Activated T-helper 1 cell treated with anti-CD3 and anti-CD28 coated beads, Interleukin-12 subunit alpha, Interleukin-12 subunit beta, Interleukin-2, Interleukin-4 antibody, amounts not matched to agents 30 ng/mL and 10 ng/mL and 1 ng/mL, durations not matched to agents 14 hours and 24 hours and 36 hours (primary cell): ENCODE measurements at regions of chr7 and their contacts with region 1.

Region 1: DNA sequence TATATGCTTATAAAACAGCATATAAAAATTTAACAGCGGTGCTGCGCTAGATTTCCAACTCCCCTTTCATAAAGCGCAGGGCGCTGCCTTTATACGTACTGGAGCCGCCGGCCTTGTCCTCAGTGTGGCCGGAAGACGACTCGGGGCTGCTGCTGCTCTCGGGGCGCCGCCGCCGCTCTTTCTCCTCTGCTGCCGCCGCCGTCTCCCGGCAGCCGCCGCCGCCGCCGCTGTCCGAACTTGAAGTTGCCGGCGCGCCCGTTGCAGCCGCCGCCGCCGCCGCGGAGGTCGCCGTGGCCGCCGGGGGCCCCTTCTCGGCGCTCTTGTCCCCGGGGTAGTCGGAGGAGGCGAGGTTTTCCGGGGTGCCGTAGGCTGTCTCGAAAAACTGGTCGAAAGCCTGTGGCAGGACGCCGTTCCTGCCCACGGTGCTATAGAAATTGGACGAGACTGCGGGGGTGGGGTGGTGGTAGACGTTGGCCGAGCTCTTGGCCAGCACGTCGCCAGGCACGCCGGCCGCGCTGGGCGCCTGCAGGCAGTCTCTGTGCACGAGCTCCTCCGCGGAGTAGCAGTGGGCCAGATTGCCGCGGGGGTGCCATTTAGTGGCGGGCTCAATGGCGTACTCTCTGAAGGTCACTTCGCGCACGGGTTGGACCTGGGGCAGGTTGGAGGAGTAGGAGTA is 557 bp downstream of the HOXA11 start:
- DNase-seq: no peak
- H3K4me3 Mint-ChIP-seq: no peak overlapping the region
- H3K27ac Mint-ChIP-seq: peak overlapping the region; percentile 87
- H3K4me1 Mint-ChIP-seq: peaks cover 5% of the 10 kb centered on the region
- H3K27me3 Mint-ChIP-seq: peaks cover 81% of the 10 kb centered on the region

Region 2: GRCh38 chr7:27150568-27151340 is 33.7 kb before region 1 on chr7:
- intact Hi-C with region 1: loop called (anchors 1 kb)
- DNase-seq: peak; percentile 46
- H3K4me3 Mint-ChIP-seq: peak overlapping the region; percentile 57
- H3K27ac Mint-ChIP-seq: peak overlapping the region; percentile 7
- H3K4me1 Mint-ChIP-seq: peaks cover 18% of the 10 kb centered on the region
- H3K27me3 Mint-ChIP-seq: peaks cover 88% of the 10 kb centered on the region

Region 3: DNA sequence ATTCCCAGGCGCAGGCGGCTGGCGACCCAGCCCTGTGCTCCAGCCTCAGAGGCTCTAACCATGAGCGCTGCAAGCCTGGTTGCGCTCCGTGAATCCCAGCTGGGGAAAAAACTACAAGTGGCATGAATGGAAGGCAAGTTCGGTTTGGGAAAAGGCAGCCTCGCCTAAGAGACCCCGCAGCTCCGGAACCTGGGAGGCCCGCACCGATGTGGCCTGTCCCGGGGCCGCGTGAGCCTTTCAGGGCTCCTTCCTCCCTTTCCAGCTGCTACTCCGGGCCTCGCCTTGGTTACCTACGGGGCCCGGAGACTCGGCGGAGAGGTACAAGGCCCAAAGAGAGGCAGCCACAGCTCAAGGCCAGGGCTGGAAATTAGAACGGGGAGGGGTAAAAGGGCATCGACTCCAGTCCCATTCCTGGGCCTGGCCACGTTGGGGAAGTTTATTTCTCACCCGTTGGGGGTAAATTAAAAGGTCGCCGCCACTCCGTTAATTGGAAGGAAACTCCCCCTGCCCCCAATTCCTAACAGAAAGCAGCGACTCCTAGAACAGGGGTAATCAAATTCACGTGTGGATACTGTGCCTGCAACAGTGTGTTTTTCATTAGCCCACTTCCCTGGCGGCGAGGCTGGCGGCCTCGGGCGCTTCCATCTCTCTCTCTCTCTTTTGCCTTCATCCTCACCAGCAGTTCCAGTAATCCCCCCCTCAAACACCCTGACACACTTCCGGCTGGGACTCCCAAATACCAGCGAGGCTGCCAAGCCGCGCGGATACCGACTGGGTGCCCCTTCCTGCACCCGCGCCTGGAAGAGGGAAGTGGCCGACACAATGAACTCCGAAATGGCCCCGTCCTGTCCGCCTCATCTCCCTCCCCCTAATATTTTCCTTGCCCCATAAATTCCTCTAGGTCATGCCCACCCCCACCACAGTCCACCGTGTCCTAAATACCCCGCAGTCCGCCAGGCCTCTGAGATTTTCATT is 17.7 kb before region 1 on chr7:
- intact Hi-C with region 1: loop called (anchors 1 kb)
- DNase-seq: no peak
- H3K4me3 Mint-ChIP-seq: no peak overlapping the region
- H3K27ac Mint-ChIP-seq: peak overlapping the region; percentile 58
- H3K4me1 Mint-ChIP-seq: peaks cover 6% of the 10 kb centered on the region
- H3K27me3 Mint-ChIP-seq: peaks cover 75% of the 10 kb centered on the region

Region 4: GRCh38 chr7:27172823-27173510 is 11.5 kb before region 1 on chr7:
- intact Hi-C with region 1: loop called (anchors 1 kb)
- DNase-seq: no peak
- H3K4me3 Mint-ChIP-seq: no peak overlapping the region
- H3K27ac Mint-ChIP-seq: peak overlapping the region; percentile 92
- H3K4me1 Mint-ChIP-seq: peaks cover 8% of the 10 kb centered on the region
- H3K27me3 Mint-ChIP-seq: peaks cover 53% of the 10 kb centered on the region

Region 5: GRCh38 chr7:27283558-27283957 is 99.1 kb after region 1 on chr7:
- intact Hi-C with region 1: no loop called
- DNase-seq: no peak
- H3K4me3 Mint-ChIP-seq: no peak overlapping the region
- H3K27ac Mint-ChIP-seq: no peak overlapping the region
- H3K4me1 Mint-ChIP-seq: no peaks in the 10 kb centered on the region
- H3K27me3 Mint-ChIP-seq: peaks cover 3% of the 10 kb centered on the region